ENCODE measurements at regions of chr12 and their contacts with region 1.

Region 1: DNA sequence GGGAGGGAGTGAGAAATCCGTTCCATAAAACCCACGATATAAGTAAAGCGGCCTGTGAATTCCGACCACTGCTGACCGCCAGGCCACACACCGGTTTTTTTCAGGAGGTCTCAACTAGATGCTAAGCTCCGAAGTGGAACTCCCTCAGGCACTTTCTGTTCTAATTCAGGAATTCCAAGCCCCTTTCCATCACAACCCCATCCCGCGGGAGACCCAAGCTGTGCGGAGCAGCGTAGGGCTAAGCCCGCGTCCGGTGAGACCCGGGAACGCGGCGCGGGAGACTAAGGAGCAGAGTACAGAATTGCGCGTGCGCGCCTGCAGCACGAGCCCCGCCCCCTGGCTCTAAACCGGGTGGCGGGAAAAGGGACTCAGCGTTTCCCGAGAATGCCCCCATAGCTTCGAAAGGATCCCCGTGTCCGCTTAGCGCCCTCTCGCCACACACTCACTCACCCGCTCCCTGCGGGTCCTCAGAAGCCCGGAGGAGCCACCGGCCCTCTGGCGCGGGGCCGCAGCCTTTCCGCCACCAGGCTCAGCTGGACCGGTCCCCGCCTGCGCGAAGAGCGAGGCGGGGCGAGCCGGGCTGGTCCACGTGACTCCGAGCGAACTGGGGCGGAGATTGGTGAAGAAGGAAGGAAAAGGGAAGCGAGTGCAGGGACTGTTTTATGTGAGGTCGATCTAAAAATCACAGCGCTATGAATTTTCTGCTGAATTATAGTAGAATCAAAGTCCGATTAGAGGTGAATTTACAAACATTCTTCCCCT is at the start of gene TIMELESS:
- DNase-seq: peak; percentile 85 to 92
- H3K4me3 ChIP-seq: peak within 1 kb of the TSS; percentile 65
- H3K4me3 Mint-ChIP-seq: peak within 1 kb of the TSS; percentile 83
- H3K27ac Mint-ChIP-seq: peak within 1 kb of the TSS; percentile 89
- H3K4me1 ChIP-seq: peaks cover 4% of the 10 kb centered on the region; the same call in 1 of the 2 replicates
- H3K4me1 Mint-ChIP-seq: peaks cover 16% of the 10 kb centered on the region
- H3K27me3 ChIP-seq: no peaks in the 10 kb centered on the region
- H3K27me3 Mint-ChIP-seq: no peaks in the 10 kb centered on the region
- CTCF ChIP-seq: no peak
- total RNA-seq, gene TIMELESS: 40.1 and 43.2 TPM in 2 replicates

Region 2: GRCh38 chr12:56333679-56334489 is 115.2 kb before region 1 on chr12 and contains the start of gene PAN2:
- CTCF ChIA-PET with region 1: interaction called, 4 read pairs
- POLR2A ChIA-PET with region 1: interaction called, 3 read pairs
- intact Hi-C with region 1: loop called (anchors 5 kb)
- DNase-seq: peak; percentile 94 to 97
- H3K4me3 ChIP-seq: peak within 1 kb of the TSS; percentile 63
- H3K4me3 Mint-ChIP-seq: peak within 1 kb of the TSS; percentile 98
- H3K27ac Mint-ChIP-seq: peak within 1 kb of the TSS; percentile 99
- H3K4me1 ChIP-seq: peaks cover 17% of the 10 kb centered on the region
- H3K4me1 Mint-ChIP-seq: peaks cover 8% of the 10 kb centered on the region
- H3K27me3 ChIP-seq: no peaks in the 10 kb centered on the region
- H3K27me3 Mint-ChIP-seq: no peaks in the 10 kb centered on the region
- CTCF ChIP-seq: peak; percentile 65 to 77
- total RNA-seq, gene PAN2: 25.7 and 30.0 TPM in 2 replicates

Region 3: GRCh38 chr12:56766535-56766934 is 317.5 kb after region 1 on chr12:
- CTCF ChIA-PET with region 1: no interaction called
- POLR2A ChIA-PET with region 1: no interaction called
- intact Hi-C with region 1: no loop called
- DNase-seq: no peak
- H3K4me3 ChIP-seq: no peak overlapping the region
- H3K4me3 Mint-ChIP-seq: no peak overlapping the region
- H3K27ac Mint-ChIP-seq: no peak overlapping the region
- H3K4me1 ChIP-seq: no peaks in the 10 kb centered on the region
- H3K4me1 Mint-ChIP-seq: peaks cover 19% of the 10 kb centered on the region
- H3K27me3 ChIP-seq: no peaks in the 10 kb centered on the region
- H3K27me3 Mint-ChIP-seq: no peaks in the 10 kb centered on the region
- CTCF ChIP-seq: no peak

Measured in Caco-2 (cell line).